ENCODE measurements at regions of chr9 and their contacts with region 1.

Region 1: GRCh38 chr9:97710356-97711222 is 13.4 kb upstream of the XPA start:
- DNase-seq: no peak
- ATAC-seq: peak; percentile 73 to 93 (median 84)
- H3K4me3 ChIP-seq: no peak overlapping the region
- H3K27ac ChIP-seq: no peak overlapping the region
- H3K4me1 ChIP-seq: no peaks in the 10 kb centered on the region
- H3K27me3 ChIP-seq: no peaks in the 10 kb centered on the region
- CTCF ChIP-seq: peak; percentile 84

Region 2: GRCh38 chr9:97773723-97774122 is 63.1 kb after region 1 on chr9:
- intact Hi-C with region 1: loop called in 1 of 2 experiments (anchors 10 kb)
- DNase-seq: peak in 1 of 2 donors; percentile 23
- ATAC-seq: no peak
- H3K4me3 ChIP-seq: no peak overlapping the region
- H3K27ac ChIP-seq: no peak overlapping the region
- H3K4me1 ChIP-seq: no peaks in the 10 kb centered on the region
- H3K27me3 ChIP-seq: peaks cover 0 to 26% (median 7%) of the 10 kb centered on the region in 3 donors
- CTCF ChIP-seq: no peak

Region 3: GRCh38 chr9:97900738-97901565 is 190.4 kb after region 1 on chr9:
- intact Hi-C with region 1: loop called (anchors 2 kb)
- DNase-seq: no peak
- ATAC-seq: peak in 2 of 4 donors; percentile 55 to 71
- H3K4me3 ChIP-seq: no peak overlapping the region
- H3K27ac ChIP-seq: no peak overlapping the region
- H3K4me1 ChIP-seq: peaks cover 2% of the 10 kb centered on the region
- H3K27me3 ChIP-seq: no peaks in the 10 kb centered on the region
- CTCF ChIP-seq: peak; percentile 70

Region 4: GRCh38 chr9:98255578-98256296 is 545.1 kb after region 1 on chr9 and contains the start of gene TBC1D2:
- intact Hi-C with region 1: loop called in 1 of 2 experiments (anchors 10 kb)
- DNase-seq: peak; percentile 94 to 98
- ATAC-seq: peak; percentile 97 to 99 (median 98)
- H3K4me3 ChIP-seq: peak within 1 kb of the TSS; percentile 93
- H3K27ac ChIP-seq: peak within 1 kb of the TSS; percentile 90
- H3K4me1 ChIP-seq: peaks cover 6% of the 10 kb centered on the region
- H3K27me3 ChIP-seq: no peaks in the 10 kb centered on the region
- CTCF ChIP-seq: no peak
- total RNA-seq, gene TBC1D2: 1.9 to 2.7 (median 2.4) TPM